AG04449 (cell line): ENCODE measurements at regions of chr1 and their contacts with region 1.

Region 1: DNA sequence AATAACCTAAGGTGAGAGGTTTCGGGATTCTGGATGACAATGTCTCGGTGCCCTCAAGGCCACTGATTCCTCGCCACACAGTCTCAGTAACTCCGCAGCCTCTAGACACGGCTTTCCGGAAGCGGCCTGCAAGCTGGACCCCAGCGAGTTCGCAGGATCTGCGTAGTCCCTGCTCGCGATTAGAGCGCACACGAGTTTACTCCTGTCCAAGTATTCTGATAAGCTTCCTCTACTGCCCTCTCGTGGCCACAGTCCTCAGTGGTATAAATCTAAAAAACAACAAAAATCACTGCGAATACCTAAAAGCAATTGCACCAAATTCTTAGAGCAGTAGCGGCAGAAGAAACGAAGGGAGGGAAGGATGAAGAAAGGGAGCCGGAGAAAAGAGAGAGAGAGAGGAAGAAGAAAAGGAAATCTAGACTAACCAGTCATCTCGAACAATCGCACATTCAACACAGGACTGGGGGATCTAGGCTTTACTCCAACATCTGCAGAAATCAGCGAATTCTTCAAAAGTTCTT is 1.1 kb upstream of the PLXNA2 start:
- DNase-seq: peak; percentile 59
- H3K4me3 ChIP-seq: peak overlapping the region; percentile 44
- CTCF ChIP-seq: peak; percentile 60

Region 2: GRCh38 chr1:208007938-208008342 is 237.3 kb before region 1 on chr1:
- CTCF ChIA-PET with region 1: interaction called, 23 read pairs
- POLR2A ChIA-PET with region 1: no interaction called
- DNase-seq: no peak
- H3K4me3 ChIP-seq: no peak overlapping the region
- CTCF ChIP-seq: no peak

Region 3: GRCh38 chr1:208081972-208082371 is 163.3 kb before region 1 on chr1:
- CTCF ChIA-PET with region 1: interaction called, 40 read pairs
- POLR2A ChIA-PET with region 1: interaction called, 3 read pairs
- DNase-seq: no peak
- H3K4me3 ChIP-seq: no peak overlapping the region
- CTCF ChIP-seq: peak; percentile 16

Region 4: GRCh38 chr1:208115924-208116640 is 129.2 kb before region 1 on chr1:
- CTCF ChIA-PET with region 1: interaction called, 36 read pairs
- POLR2A ChIA-PET with region 1: no interaction called
- DNase-seq: no peak
- H3K4me3 ChIP-seq: no peak overlapping the region
- CTCF ChIP-seq: no peak

Region 5: DNA sequence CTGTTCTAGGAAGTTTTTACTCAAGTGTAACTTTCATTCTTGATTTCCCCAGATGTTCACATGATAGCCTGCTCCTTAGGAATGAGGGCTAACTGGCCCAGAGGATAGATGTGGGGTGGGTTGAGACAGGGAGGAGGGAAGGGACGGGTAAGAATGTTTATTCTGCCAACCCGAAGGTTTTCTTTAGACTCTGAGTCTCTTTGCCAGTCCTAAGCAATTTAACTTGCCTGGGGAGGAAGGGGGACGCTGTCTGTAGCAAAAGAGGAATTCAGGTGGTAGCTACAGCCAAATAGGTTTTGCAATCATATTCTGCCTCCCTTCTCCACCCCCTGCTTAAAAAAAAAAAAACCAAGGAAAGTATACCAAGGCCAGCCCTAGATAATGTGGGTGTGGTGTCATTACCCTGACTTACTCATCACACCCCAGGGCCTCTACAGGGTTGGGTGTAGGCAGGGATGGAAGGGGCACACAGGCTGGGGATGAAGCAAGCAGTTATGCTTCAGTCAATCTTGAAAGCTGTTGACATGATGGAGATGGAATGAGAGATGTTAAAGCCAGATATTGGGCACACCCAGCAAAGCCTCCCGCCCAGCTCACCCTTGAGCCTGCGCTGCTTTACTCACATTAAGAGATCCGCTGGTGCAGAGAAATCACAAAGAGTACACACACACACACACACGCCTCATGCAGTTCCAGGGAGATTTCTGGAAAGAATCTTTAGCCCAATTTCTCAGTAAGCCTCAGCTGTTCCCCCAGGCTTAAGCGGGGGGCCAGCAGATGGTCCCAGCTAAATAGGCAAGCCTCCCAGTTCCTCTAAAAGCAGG is 60.9 kb before region 1 on chr1:
- CTCF ChIA-PET with region 1: interaction called, 12 read pairs
- POLR2A ChIA-PET with region 1: interaction called, 5 read pairs
- DNase-seq: peak; percentile 85
- H3K4me3 ChIP-seq: no peak overlapping the region
- CTCF ChIP-seq: no peak